Calu3 (cell line): ENCODE measurements at regions of chr21 and their contacts with region 1.

Region 1: GRCh38 chr21:38355992-38356797 is 99.4 kb downstream of the KCNJ15 start:
- DNase-seq: peak; percentile 79
- H3K4me3 Mint-ChIP-seq: no peak overlapping the region
- H3K27ac Mint-ChIP-seq: no peak overlapping the region
- H3K4me1 Mint-ChIP-seq: peaks cover 12% of the 10 kb centered on the region
- H3K27me3 Mint-ChIP-seq: peaks cover 30% of the 10 kb centered on the region
- CTCF ChIP-seq: peak; percentile 77

Region 2: GRCh38 chr21:37711836-37712568 is 644.2 kb before region 1 on chr21:
- CTCF ChIA-PET with region 1: no interaction called
- intact Hi-C with region 1: loop called (anchors 5 kb)
- DNase-seq: peak; percentile 68
- H3K4me3 Mint-ChIP-seq: no peak overlapping the region
- H3K27ac Mint-ChIP-seq: no peak overlapping the region
- H3K4me1 Mint-ChIP-seq: no peaks in the 10 kb centered on the region
- H3K27me3 Mint-ChIP-seq: peaks cover 21% of the 10 kb centered on the region
- CTCF ChIP-seq: peak; percentile 71

Region 3: GRCh38 chr21:38159355-38159754 is 196.8 kb before region 1 on chr21:
- CTCF ChIA-PET with region 1: interaction called, 3 read pairs
- intact Hi-C with region 1: loop called (anchors 1 kb)
- DNase-seq: peak; percentile 64
- H3K4me3 Mint-ChIP-seq: no peak overlapping the region
- H3K27ac Mint-ChIP-seq: no peak overlapping the region
- H3K4me1 Mint-ChIP-seq: no peaks in the 10 kb centered on the region
- H3K27me3 Mint-ChIP-seq: peaks cover 55% of the 10 kb centered on the region
- CTCF ChIP-seq: peak; percentile 67

Region 4: DNA sequence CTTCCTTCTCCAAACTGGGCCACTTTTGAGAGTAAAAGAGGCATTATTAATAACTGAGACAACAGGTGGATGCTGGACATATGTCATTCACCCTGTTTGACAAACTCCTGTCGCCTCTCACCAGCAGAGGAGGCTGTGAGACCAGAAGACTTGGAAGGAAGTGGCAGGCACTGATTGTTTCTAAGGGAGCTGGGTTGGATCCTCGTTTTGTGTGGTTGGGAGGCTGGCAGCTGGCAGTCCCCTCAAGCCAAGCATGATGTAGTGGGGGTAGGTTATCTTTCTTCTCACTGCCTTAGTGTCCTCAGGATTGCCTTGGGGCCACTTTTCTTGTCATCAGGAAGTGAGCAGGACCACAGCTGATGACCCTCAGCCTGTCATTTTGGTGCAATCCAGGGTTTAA is 185.9 kb before region 1 on chr21:
- CTCF ChIA-PET with region 1: interaction called, 73 read pairs
- intact Hi-C with region 1: loop called (anchors 1 kb)
- DNase-seq: peak; percentile 52
- H3K4me3 Mint-ChIP-seq: no peak overlapping the region
- H3K27ac Mint-ChIP-seq: no peak overlapping the region
- H3K4me1 Mint-ChIP-seq: peaks cover 27% of the 10 kb centered on the region
- H3K27me3 Mint-ChIP-seq: no peaks in the 10 kb centered on the region
- CTCF ChIP-seq: no peak

Region 5: DNA sequence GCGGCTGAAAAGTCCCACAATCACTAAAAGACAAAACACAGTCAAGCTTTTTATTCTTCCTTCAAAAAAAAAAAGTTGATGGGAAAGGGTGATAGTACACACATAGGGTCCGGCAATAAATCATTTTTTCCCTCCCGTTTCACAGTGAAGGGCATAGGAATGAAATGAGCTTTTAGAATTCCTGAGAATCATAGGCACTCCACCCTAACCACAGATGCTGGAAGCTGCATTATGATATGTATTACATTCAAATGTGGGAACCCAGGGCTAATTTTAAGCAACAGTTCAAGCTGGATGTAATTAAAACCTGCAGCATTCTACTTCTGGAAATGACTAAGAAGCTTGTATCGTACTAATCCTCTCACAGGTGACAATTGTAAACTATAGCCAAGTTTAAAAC is 175.1 kb before region 1 on chr21:
- CTCF ChIA-PET with region 1: no interaction called
- intact Hi-C with region 1: no loop called
- DNase-seq: no peak
- H3K4me3 Mint-ChIP-seq: no peak overlapping the region
- H3K27ac Mint-ChIP-seq: no peak overlapping the region
- H3K4me1 Mint-ChIP-seq: peaks cover 16% of the 10 kb centered on the region
- H3K27me3 Mint-ChIP-seq: no peaks in the 10 kb centered on the region
- CTCF ChIP-seq: no peak

Region 6: GRCh38 chr21:38219049-38219628 is 137.1 kb before region 1 on chr21:
- CTCF ChIA-PET with region 1: interaction called, 62 read pairs
- intact Hi-C with region 1: loop called (anchors 1 kb)
- DNase-seq: peak; percentile 75
- H3K4me3 Mint-ChIP-seq: no peak overlapping the region
- H3K27ac Mint-ChIP-seq: peak overlapping the region; percentile 67
- H3K4me1 Mint-ChIP-seq: peaks cover 32% of the 10 kb centered on the region
- H3K27me3 Mint-ChIP-seq: no peaks in the 10 kb centered on the region
- CTCF ChIP-seq: peak; percentile 68

Region 7: DNA sequence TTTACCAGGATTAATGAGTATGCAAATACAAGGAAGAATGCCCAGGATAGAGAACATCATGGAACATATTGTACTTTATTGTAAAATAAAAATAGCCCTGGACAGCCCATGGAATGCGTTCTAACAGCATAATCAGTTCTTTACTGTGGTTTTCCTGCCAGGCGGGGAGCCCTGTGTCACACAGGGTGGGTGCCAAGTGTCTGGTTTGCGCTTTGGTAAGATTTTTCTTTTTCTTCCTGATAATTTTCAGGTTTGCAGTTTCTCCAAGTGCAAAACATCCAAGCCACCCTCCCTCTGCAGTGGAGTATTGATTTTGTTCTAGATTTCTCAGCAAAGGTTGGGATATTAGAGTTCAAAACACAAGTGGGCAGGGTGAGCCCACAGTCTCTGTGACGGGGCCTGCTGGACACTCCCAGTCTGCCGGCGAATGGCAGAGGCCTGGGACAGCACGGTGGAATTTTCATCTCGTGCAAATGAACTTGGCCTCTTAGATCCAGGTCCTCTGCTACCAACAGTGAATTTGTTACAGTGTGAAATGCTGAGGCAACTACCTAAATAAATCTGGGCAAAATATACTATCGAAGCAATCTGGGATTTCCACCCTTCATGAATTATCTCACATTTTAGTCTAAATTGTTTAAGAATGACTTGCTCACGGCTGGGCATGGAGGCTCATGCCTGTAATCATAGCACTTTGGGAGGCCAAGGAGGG is 115.0 kb before region 1 on chr21:
- CTCF ChIA-PET with region 1: no interaction called
- intact Hi-C with region 1: loop called (anchors 5 kb)
- DNase-seq: peak; percentile 56
- H3K4me3 Mint-ChIP-seq: no peak overlapping the region
- H3K27ac Mint-ChIP-seq: peak overlapping the region; percentile 39
- H3K4me1 Mint-ChIP-seq: peaks cover 34% of the 10 kb centered on the region
- H3K27me3 Mint-ChIP-seq: no peaks in the 10 kb centered on the region
- CTCF ChIP-seq: no peak

Region 8: DNA sequence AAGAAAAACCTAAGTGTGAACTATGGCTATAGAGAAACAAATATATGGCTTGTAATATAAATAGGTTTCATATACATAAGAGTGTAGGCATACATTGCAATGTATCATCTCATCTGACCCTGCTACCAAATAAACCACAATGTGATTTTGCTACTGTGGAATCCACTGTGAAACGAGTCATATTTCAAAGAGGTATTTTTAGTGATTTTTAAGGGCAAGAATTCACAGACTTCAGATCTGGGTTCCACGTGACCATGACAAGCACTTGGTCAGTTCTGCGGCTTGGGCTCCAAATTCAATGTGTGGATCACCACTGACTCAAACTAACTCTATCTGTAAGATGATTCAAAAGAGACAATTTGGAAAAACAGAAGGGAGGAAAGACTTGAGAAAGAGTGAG is 289.1 kb after region 1 on chr21:
- CTCF ChIA-PET with region 1: no interaction called
- intact Hi-C with region 1: no loop called
- DNase-seq: no peak
- H3K4me3 Mint-ChIP-seq: no peak overlapping the region
- H3K27ac Mint-ChIP-seq: no peak overlapping the region
- H3K4me1 Mint-ChIP-seq: no peaks in the 10 kb centered on the region
- H3K27me3 Mint-ChIP-seq: peaks cover 80% of the 10 kb centered on the region
- CTCF ChIP-seq: no peak